HepG2 (cell line): ENCODE measurements at regions of chr3 and their contacts with region 1.

Region 1: DNA sequence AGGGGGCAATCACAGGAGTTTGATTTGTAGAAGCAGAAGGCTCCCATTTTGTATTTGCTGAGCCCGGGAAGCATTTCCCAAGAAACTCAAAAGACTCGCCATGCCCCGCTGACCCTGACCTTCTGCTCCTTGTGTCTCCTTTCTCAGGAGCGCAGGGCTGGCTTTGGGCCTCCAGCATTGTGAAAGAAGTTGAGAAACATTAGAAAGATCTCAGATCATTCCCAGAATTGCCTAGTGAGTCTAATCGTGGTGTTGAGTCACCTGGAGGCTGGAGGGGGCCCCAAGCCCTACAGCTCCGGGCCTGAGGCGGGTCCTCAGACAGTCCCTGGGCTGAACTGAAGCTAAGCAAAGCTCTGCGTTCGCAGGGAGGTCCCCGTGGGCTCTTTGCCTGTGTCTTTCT is 10.9 kb upstream of the PIGZ start:
- DNase-seq: no peak
- ATAC-seq: peak; percentile 52
- H3K4me3 ChIP-seq: no peak overlapping the region
- H3K27ac ChIP-seq: peak overlapping the region; percentile 50
- H3K4me1 ChIP-seq: peaks cover 53% of the 10 kb centered on the region
- H3K27me3 ChIP-seq: no peaks in the 10 kb centered on the region
- CTCF ChIP-seq: no peak
- EP300 ChIP-seq: no peak
- POLR2A ChIP-seq: no peak
- RAD21 ChIP-seq: no peak

Region 2: DNA sequence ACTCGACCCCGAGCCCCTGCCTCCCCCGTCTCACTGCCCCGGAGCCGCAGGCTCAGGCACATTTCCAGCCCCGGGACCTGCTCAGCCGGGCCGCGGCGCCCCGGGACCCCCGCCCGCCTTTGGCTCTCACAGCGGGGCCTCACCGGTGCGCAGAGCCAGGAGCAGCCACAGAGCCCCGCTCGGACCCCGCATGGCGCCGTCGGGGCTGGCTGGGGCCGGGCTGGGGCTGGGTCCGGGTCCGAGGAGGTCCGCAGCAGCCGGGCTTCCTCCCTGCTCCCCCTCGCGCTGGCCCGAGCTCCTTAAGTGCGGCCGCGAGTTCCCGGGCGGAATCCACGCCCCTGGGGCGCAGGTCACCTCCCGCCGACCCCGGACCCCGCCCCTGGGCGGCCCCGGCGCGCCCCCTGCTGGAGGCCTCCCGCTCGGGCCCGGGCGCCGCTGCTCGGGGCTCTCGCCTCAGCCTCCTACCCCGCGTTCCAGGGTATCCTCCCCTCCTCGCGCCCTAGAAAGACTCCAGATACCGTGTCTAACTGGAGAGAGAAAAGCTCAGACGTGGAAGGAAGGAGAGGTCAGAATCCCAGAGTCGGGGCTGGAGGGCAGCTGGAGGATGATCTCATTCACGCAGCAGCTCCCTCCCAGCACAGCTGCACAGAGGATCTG is 50.1 kb after region 1 on chr3 and contains the start of gene MELTF:
- CTCF ChIA-PET with region 1: interaction called, 5 read pairs
- POLR2A ChIA-PET with region 1: interaction called, 3 read pairs
- in situ Hi-C with region 1: loop called (anchors 5 kb)
- intact Hi-C with region 1: loop called (anchors 1 kb)
- DNase-seq: peak; percentile 27
- ATAC-seq: peak; percentile 83
- H3K4me3 ChIP-seq: peak within 1 kb of the TSS; percentile 75 to 78 (median 78)
- H3K27ac ChIP-seq: no peak within 1 kb of the TSS
- H3K4me1 ChIP-seq: peaks cover 39% of the 10 kb centered on the region
- H3K27me3 ChIP-seq: 0 out of 5 replicates have a peak, but pooled peaks cover 0 to 7% of the 10 kb centered on the region in 2 experiments
- CTCF ChIP-seq: peak; percentile 74
- EP300 ChIP-seq: no peak
- POLR2A ChIP-seq: peak in 1 of 2 experiments; percentile 51; a peak in 1 of 4 replicates
- RAD21 ChIP-seq: peak; percentile 89
- total RNA-seq, gene MELTF: 0.97 and 3.2 TPM in 2 replicates